GM18951 (cell line): ENCODE measurements at regions of chr7 and their contacts with region 1.

Region 1: GRCh38 chr7:106757846-106758245 is 96.9 kb upstream of the CCDC71L start:
- POLR2A ChIP-seq: no peak

Region 2: GRCh38 chr7:106704000-106704840 is 53.6 kb before region 1 on chr7:
- in situ Hi-C with region 1: loop called (anchors 10 kb)
- POLR2A ChIP-seq: no peak